GM10248 (cell line): ENCODE measurements at regions of chr3 and their contacts with region 1.

Region 1: DNA sequence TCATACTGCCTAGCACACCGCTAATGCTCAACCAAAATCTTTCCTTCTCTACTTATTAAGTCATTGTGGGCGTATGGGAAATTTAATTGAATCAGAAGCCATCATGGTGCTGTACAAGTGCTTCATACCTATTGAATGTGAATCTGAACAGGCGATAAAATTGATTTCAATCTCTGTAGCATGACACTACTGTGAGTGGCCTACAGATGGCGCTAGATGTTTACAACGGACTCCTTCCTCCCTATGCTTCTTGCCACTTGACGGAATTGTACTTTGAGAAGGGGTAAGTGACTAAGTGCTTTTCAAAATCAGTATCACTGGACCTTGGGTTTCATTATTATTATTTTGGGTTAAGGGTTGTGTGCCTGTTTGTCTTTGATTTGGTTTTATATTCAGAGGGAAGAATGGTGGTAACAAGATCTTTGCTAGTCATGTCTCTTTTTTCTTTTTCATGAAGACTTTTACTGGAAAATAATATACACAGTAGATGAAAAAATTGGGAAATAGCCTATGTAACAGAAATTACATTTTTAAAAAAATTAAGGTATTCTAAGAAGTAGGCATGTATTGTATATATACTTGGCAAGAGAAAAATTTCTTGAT is 35.4 kb downstream of the ACP3 start:
- DNase-seq: peak; percentile 67
- CTCF ChIP-seq: peak; percentile 77

Region 2: GRCh38 chr3:132090921-132091320 is 261.7 kb before region 1 on chr3:
- CTCF ChIA-PET with region 1: no interaction called
- POLR2A ChIA-PET with region 1: no interaction called
- DNase-seq: no peak
- CTCF ChIP-seq: no peak

Region 3: GRCh38 chr3:132220986-132221385 is 131.7 kb before region 1 on chr3:
- CTCF ChIA-PET with region 1: no interaction called
- POLR2A ChIA-PET with region 1: no interaction called
- DNase-seq: no peak
- CTCF ChIP-seq: no peak

Region 4: GRCh38 chr3:132253262-132253878 is 99.3 kb before region 1 on chr3:
- CTCF ChIA-PET with region 1: interaction called, 11 read pairs
- POLR2A ChIA-PET with region 1: no interaction called
- DNase-seq: peak; percentile 59
- CTCF ChIP-seq: peak; percentile 66

Region 5: GRCh38 chr3:132368962-132369361 is 16.3 kb after region 1 on chr3:
- CTCF ChIA-PET with region 1: interaction called, 103 read pairs
- POLR2A ChIA-PET with region 1: no interaction called
- DNase-seq: no peak
- CTCF ChIP-seq: no peak

Region 6: DNA sequence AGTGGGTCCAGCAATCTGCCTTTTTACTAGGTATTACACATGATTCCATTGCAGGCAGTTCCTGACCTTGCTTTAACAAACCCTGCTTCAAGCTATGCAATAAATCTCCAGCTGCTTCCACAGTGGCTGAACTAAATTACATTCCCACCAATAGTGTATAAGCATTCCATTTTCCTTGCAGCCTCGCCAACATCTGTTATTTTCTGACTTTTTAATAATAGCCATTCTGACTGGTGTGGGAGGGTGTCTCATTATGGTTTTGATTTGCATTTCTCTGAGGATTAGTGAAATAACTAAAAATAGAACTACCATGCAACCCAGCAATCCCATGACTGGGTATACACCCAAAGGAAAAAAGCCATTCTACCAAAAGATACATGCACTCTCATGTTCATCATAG is 28.3 kb after region 1 on chr3:
- CTCF ChIA-PET with region 1: interaction called, 15 read pairs
- POLR2A ChIA-PET with region 1: no interaction called
- DNase-seq: no peak
- CTCF ChIP-seq: no peak

Region 7: DNA sequence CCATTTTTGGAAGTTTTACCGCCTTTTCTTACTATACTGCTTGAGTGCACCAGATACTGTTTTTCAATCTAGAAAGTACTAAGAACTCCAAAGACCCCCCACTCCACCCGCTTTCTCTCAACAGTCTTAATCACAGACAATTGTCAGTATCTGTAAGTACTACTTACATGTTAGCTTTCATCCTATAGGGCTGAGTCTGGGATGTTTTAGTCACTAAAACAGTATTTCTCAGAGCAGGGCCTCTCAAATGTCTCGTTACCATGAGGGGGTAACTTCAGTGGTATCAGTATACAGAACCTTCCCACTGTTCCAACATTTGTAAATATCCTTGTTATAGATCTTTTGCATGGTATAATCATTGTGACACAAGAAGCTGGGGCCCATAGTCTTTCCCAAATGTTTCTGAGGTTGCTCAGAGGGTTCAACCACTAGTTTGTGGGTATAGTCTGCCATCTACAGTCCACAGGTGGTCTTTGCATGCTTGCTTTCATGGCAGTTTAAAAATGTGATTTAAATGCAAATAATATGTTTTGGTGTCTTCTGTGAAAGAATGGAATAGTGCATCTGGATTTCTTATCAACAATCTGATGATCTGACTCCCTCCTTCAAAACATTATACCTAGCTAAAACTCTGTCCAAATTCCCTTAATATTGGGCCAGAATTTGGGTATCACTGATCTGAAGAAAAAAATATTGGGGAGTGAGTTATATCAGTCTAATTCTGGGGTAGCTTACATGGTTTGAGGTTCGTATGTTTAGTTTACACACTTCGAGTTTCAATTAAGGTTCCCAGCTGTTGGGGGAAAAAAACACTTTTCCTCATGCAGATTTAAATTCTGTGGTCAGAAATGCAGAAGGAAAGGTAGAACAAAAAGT is 46.6 kb after region 1 on chr3:
- CTCF ChIA-PET with region 1: interaction called, 404 read pairs
- POLR2A ChIA-PET with region 1: no interaction called
- DNase-seq: peak; percentile 53
- CTCF ChIP-seq: peak; percentile 75